ENCODE measurements at regions of chr9 and their contacts with region 1.

Region 1: DNA sequence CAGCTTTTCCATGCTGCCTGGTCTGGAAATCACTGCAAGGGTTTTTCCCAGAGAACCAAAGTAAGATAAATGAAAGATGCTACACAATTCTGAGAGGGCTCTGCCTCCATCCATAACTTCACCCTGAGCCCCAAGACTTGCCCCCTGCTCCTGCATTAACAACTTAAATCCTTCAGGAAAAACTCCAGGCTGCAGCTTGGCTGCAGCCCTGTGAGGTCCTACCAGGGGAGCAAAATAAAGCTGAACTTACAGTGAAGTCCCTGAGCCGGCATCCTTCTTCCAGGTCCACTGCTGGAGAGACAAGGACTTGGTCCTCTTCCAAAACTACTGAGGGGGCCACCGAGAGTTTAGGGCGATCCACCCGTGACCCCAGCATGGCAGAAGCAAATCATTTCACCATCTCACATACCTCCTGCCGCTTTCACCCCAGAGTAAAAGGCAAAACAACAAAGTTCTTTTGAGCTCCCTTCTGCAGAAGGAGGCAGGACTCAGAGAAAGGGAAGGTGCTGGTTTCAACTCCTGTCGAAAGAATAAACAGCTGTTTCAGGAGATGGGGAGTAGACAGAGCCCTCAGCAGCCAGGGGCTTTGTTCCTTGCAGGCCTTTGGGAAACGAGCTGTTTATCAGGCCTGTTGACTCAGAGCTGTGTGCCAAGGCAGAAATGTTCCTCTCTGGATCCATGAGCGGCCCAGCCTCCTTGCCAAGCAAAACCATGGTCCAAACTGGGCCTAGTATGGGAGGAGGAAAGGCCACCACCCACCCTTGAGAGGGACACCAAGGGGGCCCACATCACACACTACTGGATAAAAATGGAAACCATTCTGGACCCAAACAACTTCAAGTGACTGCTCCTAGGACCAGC is 20.6 kb downstream of the GGTA1 start:
- DNase-seq: no peak
- ATAC-seq: no peak
- H3K4me3 Mint-ChIP-seq: no peak overlapping the region
- H3K27ac Mint-ChIP-seq: no peak overlapping the region
- H3K4me1 Mint-ChIP-seq: no peaks in the 10 kb centered on the region
- H3K27me3 Mint-ChIP-seq: peaks cover 2% of the 10 kb centered on the region
- CTCF ChIP-seq: no peak

Region 2: DNA sequence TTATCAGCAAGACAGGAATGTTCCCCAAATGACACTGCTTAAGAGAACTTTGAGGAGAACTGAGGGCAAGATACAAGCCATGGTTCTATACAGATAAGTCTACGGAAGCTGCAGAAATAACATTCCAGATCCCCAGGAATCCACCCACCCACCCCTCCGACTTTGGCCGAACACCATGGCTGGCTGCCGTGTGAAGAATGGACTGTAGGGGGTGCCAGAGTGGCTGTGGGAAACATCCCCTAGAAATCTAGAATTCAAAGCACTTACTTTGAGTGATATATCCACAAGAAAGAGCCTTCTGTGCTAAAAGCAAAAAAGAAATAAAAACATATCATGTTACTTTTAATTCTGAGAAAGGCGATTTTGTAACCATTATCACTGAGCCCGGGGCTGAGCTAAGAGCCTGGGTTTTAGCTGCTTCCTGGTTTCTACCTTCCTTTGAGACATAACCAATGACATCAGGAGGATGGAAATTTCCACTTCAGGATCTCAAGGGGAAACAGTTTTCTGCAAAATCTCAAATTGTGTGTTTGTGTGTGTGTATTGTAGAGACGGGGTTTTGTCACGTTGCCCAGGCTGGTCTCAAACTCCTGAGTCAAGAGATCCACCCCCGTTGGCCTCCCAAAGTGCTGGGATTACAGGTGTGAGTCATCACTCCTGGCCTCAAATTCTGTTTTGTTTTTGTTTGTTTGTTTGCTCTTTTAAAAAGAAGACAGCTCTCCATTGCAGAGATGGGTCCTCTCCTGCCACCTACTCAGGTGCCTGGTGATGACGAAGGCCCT is 15.8 kb before region 1 on chr9:
- CTCF ChIA-PET with region 1: interaction called, 13 read pairs
- POLR2A ChIA-PET with region 1: no interaction called
- intact Hi-C with region 1: no loop called
- DNase-seq: peak; percentile 60
- ATAC-seq: no peak
- H3K4me3 Mint-ChIP-seq: no peak overlapping the region
- H3K27ac Mint-ChIP-seq: no peak overlapping the region
- H3K4me1 Mint-ChIP-seq: peaks cover 13% of the 10 kb centered on the region
- H3K27me3 Mint-ChIP-seq: peaks cover 29% of the 10 kb centered on the region
- CTCF ChIP-seq: peak; percentile 63

Region 3: DNA sequence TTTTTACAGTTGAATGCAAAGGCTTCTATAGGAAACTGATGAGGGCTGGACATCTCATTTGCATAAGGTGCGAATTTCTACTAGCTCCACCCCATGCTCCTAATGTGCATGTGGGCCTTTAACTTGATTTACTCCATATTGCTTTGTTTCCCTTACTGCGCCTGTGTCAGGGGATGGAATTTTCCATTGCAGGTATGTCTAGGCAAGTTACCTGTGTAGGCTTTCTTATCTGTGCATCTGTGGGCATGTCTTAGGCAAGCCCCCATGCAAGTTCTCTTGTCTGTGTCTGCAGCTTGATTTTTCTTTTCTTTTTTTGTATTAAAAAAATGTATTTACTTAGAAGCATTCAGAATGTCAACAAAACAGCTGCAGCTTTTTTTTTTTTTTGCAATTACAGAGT is 40.0 kb after region 1 on chr9:
- CTCF ChIA-PET with region 1: no interaction called
- POLR2A ChIA-PET with region 1: no interaction called
- intact Hi-C with region 1: no loop called
- DNase-seq: no peak
- ATAC-seq: no peak
- H3K4me3 Mint-ChIP-seq: no peak overlapping the region
- H3K27ac Mint-ChIP-seq: no peak overlapping the region
- H3K4me1 Mint-ChIP-seq: no peaks in the 10 kb centered on the region
- H3K27me3 Mint-ChIP-seq: peaks cover 10% of the 10 kb centered on the region
- CTCF ChIP-seq: no peak